Activated T-helper 2 cell treated with anti-CD3 and anti-CD28 coated beads, Interferon-gamma antibody, Interleukin-2, Interleukin-4, amounts not matched to agents 10 μg/mL and 5 μg/mL and 100 μg/mL, durations not matched to agents 14 hours and 24 hours and 36 hours (primary cell): ENCODE measurements at regions of chr16 and their contacts with region 1.

Region 1: DNA sequence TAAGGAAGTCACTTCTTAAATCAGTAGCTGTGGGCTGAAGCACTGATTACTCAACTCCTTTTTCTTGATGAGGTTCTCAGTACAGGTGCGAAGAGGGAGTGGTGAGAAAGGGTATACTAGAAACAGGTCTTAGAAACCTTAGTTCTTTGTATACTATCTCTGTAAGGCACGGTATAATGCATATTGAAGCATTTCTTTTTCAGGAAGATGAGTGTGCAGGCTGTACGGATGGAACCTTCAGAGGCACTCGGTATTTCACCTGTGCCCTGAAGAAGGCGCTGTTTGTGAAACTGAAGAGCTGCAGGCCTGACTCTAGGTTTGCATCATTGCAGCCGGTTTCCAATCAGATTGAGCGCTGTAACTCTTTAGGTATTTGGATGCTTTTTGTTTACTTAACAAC is 39.2 kb downstream of the CYLD start:
- DNase-seq: no peak
- H3K4me3 Mint-ChIP-seq: peak overlapping the region; percentile 27
- H3K27ac Mint-ChIP-seq: peak overlapping the region; percentile 84
- H3K4me1 Mint-ChIP-seq: peaks cover 46% of the 10 kb centered on the region
- H3K27me3 Mint-ChIP-seq: no peaks in the 10 kb centered on the region

Region 2: DNA sequence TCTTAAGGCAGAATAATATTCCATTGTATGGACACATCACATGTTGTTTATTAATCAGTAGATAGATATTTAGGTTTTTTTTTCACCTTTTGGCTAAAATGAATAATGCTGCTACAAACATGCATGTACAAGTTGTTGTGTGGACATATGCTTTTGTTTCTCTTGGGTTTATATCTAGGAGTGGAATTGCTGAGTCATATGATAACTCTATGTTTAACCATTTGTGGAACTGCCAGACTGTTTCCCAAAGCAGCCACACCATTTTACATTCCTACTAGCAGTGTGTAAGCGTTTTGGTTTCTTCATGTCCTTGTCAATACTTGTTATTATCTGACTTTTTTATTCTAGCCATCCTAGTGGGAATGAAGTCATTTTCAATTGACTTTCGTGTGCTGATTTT is 17.8 kb before region 1 on chr16:
- intact Hi-C with region 1: loop called (anchors 1 kb)
- DNase-seq: no peak
- H3K4me3 Mint-ChIP-seq: no peak overlapping the region
- H3K27ac Mint-ChIP-seq: peak overlapping the region; percentile 24
- H3K4me1 Mint-ChIP-seq: peaks cover 65% of the 10 kb centered on the region
- H3K27me3 Mint-ChIP-seq: no peaks in the 10 kb centered on the region